Activated naive CD4-positive, alpha-beta T cell treated with anti-CD3 and anti-CD28 coated beads for 36 hours (primary cell): ENCODE measurements at regions of chr10 and their contacts with region 1.

Region 1: GRCh38 chr10:97037365-97038361 is 148.1 kb downstream of the SLIT1 start:
- DNase-seq: peak; percentile 86
- H3K4me3 Mint-ChIP-seq: peak overlapping the region; percentile 48
- H3K27ac Mint-ChIP-seq: no peak overlapping the region
- H3K4me1 Mint-ChIP-seq: peaks cover 10% of the 10 kb centered on the region
- H3K27me3 Mint-ChIP-seq: no peaks in the 10 kb centered on the region

Region 2: GRCh38 chr10:96374985-96375830 is 662.5 kb before region 1 on chr10:
- CTCF ChIA-PET with region 1: interaction called, 3 read pairs
- intact Hi-C with region 1: loop called (anchors 10 kb)
- DNase-seq: peak; percentile 89
- H3K4me3 Mint-ChIP-seq: peak overlapping the region; percentile 74
- H3K27ac Mint-ChIP-seq: no peak overlapping the region
- H3K4me1 Mint-ChIP-seq: peaks cover 6% of the 10 kb centered on the region
- H3K27me3 Mint-ChIP-seq: peaks cover 3% of the 10 kb centered on the region

Region 3: GRCh38 chr10:96714031-96714590 is 323.6 kb before region 1 on chr10:
- CTCF ChIA-PET with region 1: no interaction called
- intact Hi-C with region 1: no loop called
- DNase-seq: no peak
- H3K4me3 Mint-ChIP-seq: no peak overlapping the region
- H3K27ac Mint-ChIP-seq: no peak overlapping the region
- H3K4me1 Mint-ChIP-seq: peaks cover 2% of the 10 kb centered on the region
- H3K27me3 Mint-ChIP-seq: no peaks in the 10 kb centered on the region

Region 4: DNA sequence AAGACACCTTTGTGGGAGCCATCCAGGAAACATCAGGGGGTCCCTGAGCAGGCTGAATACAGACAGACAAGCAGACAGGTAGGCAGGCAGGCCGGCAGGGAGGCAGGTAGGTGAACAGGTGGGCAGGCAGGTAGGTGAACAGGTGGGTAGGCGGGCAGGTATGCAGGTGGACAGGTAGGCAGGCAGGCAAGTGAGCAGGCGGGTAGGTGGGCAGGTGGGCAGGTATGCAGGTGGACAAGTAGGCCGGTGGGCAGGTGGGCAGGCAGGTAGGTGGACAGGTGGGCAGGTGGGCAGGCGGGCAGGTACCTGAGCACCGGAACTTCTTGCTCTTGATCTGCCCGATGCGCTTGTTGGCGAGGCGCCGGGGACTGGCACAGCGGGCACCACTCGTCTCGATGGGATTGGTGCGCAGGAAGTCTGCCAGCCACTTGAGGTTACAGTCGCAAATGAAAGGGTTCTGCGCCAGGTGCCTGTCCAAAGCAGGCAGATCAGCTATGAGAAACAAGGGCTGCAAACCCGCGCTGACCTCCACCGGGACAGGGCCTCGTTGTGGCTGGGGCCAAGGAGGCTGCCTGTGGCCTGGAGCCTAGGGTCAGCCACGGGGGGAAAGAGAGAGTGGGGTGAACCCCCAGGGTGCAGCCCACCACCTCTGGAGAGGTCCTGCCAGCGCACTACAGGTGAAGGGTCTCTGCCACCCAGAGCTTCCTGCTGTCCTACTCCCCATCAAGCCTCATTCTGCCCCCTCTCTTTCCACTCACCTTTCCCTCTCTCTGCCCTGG is 11.2 kb after region 1 on chr10:
- CTCF ChIA-PET with region 1: interaction called, 16 read pairs
- intact Hi-C with region 1: no loop called
- DNase-seq: no peak
- H3K4me3 Mint-ChIP-seq: no peak overlapping the region
- H3K27ac Mint-ChIP-seq: no peak overlapping the region
- H3K4me1 Mint-ChIP-seq: no peaks in the 10 kb centered on the region
- H3K27me3 Mint-ChIP-seq: peaks cover 2% of the 10 kb centered on the region

Region 5: GRCh38 chr10:97117372-97117771 is 79.7 kb after region 1 on chr10:
- CTCF ChIA-PET with region 1: interaction called, 15 read pairs
- intact Hi-C with region 1: loop called (anchors 5 kb)
- DNase-seq: no peak
- H3K4me3 Mint-ChIP-seq: no peak overlapping the region
- H3K27ac Mint-ChIP-seq: no peak overlapping the region
- H3K4me1 Mint-ChIP-seq: no peaks in the 10 kb centered on the region
- H3K27me3 Mint-ChIP-seq: peaks cover 2% of the 10 kb centered on the region

Region 6: DNA sequence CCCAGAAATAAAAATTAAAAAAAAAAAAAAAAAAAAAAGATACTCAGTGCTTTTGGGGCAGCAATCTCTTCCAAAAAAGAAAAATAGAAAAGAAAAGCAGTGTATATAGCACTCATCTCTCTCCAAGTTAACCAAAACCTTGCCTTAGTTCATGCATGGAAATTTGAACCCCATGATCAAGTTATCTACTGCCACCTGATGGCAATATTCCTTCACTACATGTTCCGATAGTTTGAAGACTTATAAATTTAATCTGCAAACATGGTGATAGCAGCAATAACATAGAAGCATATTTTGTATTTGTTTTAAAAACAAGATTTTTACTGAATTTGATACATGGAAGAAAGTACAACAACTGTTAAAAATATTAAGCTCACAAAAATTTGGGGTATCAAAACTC is 196.7 kb after region 1 on chr10:
- CTCF ChIA-PET with region 1: interaction called, 12 read pairs
- intact Hi-C with region 1: no loop called
- DNase-seq: no peak
- H3K4me3 Mint-ChIP-seq: no peak overlapping the region
- H3K27ac Mint-ChIP-seq: no peak overlapping the region
- H3K4me1 Mint-ChIP-seq: peaks cover 19% of the 10 kb centered on the region
- H3K27me3 Mint-ChIP-seq: no peaks in the 10 kb centered on the region